PC-9 (cell line): ENCODE measurements at regions of chr15 and their contacts with region 1.

Region 1: GRCh38 chr15:57340682-57341259 is 35.5 kb upstream of the CGNL1 start:
- DNase-seq: peak; percentile 46 to 50
- H3K4me3 ChIP-seq: no peak overlapping the region
- H3K27ac ChIP-seq: no peak overlapping the region
- H3K4me1 ChIP-seq: no peaks in the 10 kb centered on the region
- H3K27me3 ChIP-seq: no peaks in the 10 kb centered on the region
- CTCF ChIP-seq: peak; percentile 87

Region 2: DNA sequence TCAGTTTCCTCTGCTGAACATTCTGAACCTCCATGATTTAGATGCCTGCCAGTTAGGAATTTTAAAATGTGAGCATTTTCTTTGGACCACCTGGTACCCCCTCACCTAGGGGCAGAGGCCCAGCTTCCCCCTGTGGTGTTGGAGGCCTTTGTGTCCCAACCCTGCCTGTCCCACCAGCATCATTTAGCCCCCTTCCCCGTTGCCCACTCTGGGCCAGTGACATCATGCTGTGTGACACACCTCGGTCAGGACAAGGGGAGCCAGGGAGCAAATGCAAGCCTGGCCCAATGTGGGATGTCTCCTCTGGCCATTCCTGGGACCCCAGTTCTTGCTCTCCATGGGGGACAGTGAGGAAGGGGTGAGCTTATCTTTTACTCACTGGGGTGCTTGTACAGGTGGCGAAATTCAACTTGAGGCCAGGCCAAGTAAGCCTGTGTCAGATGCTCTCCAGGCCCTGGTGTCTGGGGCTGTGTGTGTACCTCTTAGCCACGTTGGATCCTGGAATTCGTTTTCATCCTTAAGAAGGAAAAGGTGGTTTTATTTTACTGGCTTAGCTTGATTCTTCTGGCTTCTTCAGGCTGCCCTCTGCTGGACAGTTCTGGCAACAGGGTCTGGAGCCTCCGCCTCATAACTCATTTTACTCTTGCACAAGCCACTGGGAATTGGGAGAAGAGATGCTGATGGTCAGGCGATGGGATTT is 201.2 kb after region 1 on chr15:
- CTCF ChIA-PET with region 1: interaction called, 13 read pairs
- POLR2A ChIA-PET with region 1: no interaction called
- intact Hi-C with region 1: loop called (anchors 5 kb)
- DNase-seq: peak in 1 of 2 experiments; percentile 70
- H3K4me3 ChIP-seq: no peak overlapping the region
- H3K27ac ChIP-seq: no peak overlapping the region
- H3K4me1 ChIP-seq: no peaks in the 10 kb centered on the region
- H3K27me3 ChIP-seq: no peaks in the 10 kb centered on the region
- CTCF ChIP-seq: peak; percentile 81

Region 3: DNA sequence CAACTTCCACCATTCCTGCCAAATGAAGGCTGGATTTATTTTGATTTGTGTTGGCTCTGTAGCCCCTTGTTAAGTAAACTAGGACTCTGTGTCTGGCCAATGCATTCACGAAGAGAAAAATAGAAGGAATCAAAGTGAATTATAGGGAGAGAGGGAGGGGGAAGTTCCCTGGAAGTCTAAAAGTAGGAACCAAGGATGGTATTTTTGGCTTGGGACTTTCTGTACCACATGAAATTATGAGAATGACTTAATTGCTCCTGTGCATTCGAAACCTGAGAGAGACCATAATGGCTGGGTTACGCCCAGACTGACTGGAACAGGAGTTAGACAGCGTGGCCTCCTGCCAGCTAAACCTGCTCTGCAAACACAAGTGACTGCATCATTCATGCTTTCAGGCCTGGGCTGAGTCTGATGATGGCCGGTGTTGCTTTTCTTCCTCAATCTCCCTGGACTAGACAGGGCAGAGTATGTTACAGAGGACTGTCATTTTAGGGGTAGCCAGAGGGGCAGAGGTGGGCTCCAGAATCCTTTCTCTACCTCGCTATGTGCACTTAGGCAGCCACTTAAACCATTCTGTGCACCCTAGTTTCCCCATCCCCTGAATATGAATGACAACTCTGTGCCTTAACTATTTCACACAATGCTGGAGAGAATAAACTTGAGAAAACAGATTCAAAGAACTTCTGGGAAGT is 1973.0 kb after region 1 on chr15:
- CTCF ChIA-PET with region 1: no interaction called
- POLR2A ChIA-PET with region 1: no interaction called
- intact Hi-C with region 1: no loop called
- DNase-seq: peak; percentile 73
- H3K4me3 ChIP-seq: no peak overlapping the region
- H3K27ac ChIP-seq: peak overlapping the region; percentile 49
- H3K4me1 ChIP-seq: peaks cover 28% of the 10 kb centered on the region
- H3K27me3 ChIP-seq: no peaks in the 10 kb centered on the region
- CTCF ChIP-seq: no peak